Calu3 (cell line): ENCODE measurements at regions of chr17 and their contacts with region 1.

Region 1: GRCh38 chr17:81959362-81960129 is 1.4 kb downstream of the NOTUM start:
- DNase-seq: peak; percentile 76
- H3K4me3 Mint-ChIP-seq: peak overlapping the region; percentile 24
- H3K27ac Mint-ChIP-seq: no peak overlapping the region
- H3K4me1 Mint-ChIP-seq: no peaks in the 10 kb centered on the region
- H3K27me3 Mint-ChIP-seq: peaks cover 56% of the 10 kb centered on the region
- CTCF ChIP-seq: peak; percentile 80

Region 2: GRCh38 chr17:81666342-81667191 is 293.0 kb before region 1 on chr17 and contains the starts of genes CCDC137 and OXLD1:
- CTCF ChIA-PET with region 1: no interaction called
- intact Hi-C with region 1: no loop called
- DNase-seq: peak; percentile 97
- H3K4me3 Mint-ChIP-seq: peak within 1 kb of the TSS; percentile 82
- H3K27ac Mint-ChIP-seq: peak within 1 kb of the TSS; percentile 62
- H3K4me1 Mint-ChIP-seq: peaks cover 20% of the 10 kb centered on the region
- H3K27me3 Mint-ChIP-seq: no peaks in the 10 kb centered on the region
- CTCF ChIP-seq: no peak
- total RNA-seq, gene CCDC137: 37.5 and 37.8 TPM in 2 replicates
- total RNA-seq, gene OXLD1: 36.5 and 39.5 TPM in 2 replicates

Region 3: GRCh38 chr17:82037113-82037888 is 77.8 kb after region 1 on chr17 and contains the start of gene DCXR:
- CTCF ChIA-PET with region 1: interaction called, 11 read pairs
- intact Hi-C with region 1: no loop called
- DNase-seq: peak; percentile 98
- H3K4me3 Mint-ChIP-seq: peak within 1 kb of the TSS; percentile 86
- H3K27ac Mint-ChIP-seq: peak within 1 kb of the TSS; percentile 31
- H3K4me1 Mint-ChIP-seq: peaks cover 7% of the 10 kb centered on the region
- H3K27me3 Mint-ChIP-seq: no peaks in the 10 kb centered on the region
- CTCF ChIP-seq: peak; percentile 84
- total RNA-seq, gene DCXR: 87.8 and 95.3 TPM in 2 replicates